ENCODE measurements at regions of chr2 and their contacts with region 1.

Region 1: GRCh38 chr2:128062571-128062970 is 28.4 kb upstream of the UGGT1 start:
- DNase-seq: no peak
- H3K4me3 ChIP-seq: no peak overlapping the region
- H3K27ac ChIP-seq: no peak overlapping the region
- H3K27me3 ChIP-seq: no peaks in the 10 kb centered on the region
- CTCF ChIP-seq: no peak

Region 2: DNA sequence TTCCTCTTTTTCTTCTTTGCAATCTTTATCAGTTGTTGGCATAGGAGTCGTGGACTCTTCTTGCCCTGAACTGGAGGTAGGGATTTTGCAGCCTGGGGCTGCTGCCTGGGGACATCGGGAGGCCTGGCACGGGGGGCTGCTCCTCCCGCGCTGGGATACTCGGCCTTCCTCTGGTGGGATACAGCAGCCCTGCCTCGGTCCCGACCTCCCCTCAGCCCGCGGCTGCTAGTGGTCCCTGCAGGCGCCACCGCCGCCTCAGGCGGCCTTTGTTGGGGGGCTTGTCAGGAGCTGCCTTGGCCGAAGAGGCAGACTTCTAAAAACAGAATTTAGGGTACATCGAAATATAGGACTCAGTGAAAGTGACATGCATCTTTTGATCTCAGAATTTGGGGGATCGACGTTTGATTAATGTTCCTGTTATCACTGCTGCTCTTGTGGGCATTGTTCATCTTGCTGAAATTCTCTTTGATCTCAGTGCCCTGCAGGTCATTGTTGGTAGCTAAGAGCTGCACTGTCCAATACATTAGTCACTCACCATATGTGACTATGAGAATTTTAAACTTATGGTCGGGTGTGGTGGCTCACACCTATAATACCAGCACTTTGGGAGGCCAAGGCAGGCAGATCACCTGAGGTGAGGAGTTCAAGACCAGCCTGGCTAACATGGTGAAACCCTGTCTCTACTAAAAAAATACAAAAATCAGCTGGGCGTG is 220.9 kb before region 1 on chr2:
- intact Hi-C with region 1: no loop called
- DNase-seq: no peak
- H3K4me3 ChIP-seq: no peak overlapping the region
- H3K27ac ChIP-seq: no peak overlapping the region
- H3K27me3 ChIP-seq: no peaks in the 10 kb centered on the region
- CTCF ChIP-seq: no peak

Region 3: DNA sequence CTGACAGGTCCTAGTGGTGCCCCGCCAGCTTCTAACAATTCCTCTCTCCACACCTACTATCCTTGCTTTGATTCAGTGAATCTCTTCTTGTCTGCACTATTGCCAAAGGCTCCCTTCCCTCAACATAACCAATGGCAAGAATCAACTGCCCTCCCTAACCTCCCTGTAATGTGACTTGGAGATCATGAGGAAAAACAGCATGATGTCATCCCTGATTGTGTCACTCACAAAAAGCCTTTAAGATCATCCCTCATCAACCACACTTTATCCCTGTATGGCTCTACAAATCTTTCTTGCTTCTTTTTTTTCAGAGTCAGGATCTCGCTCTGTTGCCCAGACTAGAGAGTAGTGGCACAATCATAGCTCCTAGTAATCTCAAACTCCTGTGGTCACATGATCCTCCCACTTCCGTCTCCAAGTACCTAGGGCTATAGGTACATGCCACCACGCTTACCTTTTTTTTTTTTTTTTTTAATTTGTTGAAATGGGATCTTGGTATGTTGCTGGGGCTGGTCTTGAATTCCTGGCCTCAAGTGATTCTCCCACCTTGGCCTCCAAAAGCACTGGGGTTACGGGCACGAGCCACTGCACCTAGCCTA is 54.4 kb before region 1 on chr2:
- intact Hi-C with region 1: no loop called
- DNase-seq: no peak
- H3K4me3 ChIP-seq: no peak overlapping the region
- H3K27ac ChIP-seq: peak overlapping the region in 6 of 59 donors; percentile 1 to 53 (median 28)
- H3K27me3 ChIP-seq: no peaks in the 10 kb centered on the region
- CTCF ChIP-seq: no peak

Region 4: DNA sequence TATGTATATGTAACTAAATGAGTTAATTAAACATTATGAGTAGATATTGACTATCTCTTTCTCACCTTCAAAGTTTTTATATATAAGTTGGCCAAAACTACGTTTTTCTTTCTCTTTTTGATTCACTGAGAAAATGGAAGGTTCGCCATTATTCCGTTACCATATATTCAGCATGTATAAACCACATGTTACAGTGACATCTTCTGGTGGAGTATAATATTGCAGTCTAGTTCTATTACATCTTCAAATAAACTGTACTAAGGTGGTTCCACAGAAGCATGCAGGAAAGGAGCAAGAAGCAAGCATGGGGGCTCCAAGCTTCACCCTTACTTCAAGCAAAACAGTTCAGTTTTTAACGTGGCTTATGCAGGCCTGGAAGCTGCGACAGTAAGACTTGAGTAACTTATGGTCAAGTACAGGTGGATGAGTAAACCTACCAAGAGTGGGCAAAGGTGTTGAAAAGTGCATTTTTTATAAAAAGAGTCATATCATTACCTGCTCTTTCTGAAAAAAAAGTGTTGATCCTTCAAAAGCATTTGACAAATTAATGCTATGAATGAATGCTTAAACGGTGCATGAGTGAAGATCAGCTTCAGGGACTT is 1787.1 kb after region 1 on chr2:
- intact Hi-C with region 1: loop called in 1 of 2 experiments (anchors 5 kb)
- DNase-seq: no peak
- H3K4me3 ChIP-seq: peak overlapping the region in 3 of 59 donors; percentile 1 to 28 (median 4)
- H3K27ac ChIP-seq: no peak overlapping the region
- H3K27me3 ChIP-seq: no peaks in the 10 kb centered on the region
- CTCF ChIP-seq: peak; percentile 49 to 89 (median 74)